HepG2 (cell line): ENCODE measurements at regions of chr10 and their contacts with region 1.

Region 1: GRCh38 chr10:52566471-52567246 is 205.9 kb downstream of the MBL2 start:
- DNase-seq: peak; percentile 16
- ATAC-seq: no peak
- H3K4me3 ChIP-seq: no peak overlapping the region
- H3K27ac ChIP-seq: no peak overlapping the region
- H3K4me1 ChIP-seq: no peaks in the 10 kb centered on the region
- H3K27me3 ChIP-seq: no peaks in the 10 kb centered on the region
- CTCF ChIP-seq: peak; percentile 35; the same call in 1 of the 2 replicates
- EP300 ChIP-seq: no peak
- POLR2A ChIP-seq: no peak
- RAD21 ChIP-seq: 0 out of 2 replicates have a peak, but pooled peaks have one; percentile 29

Region 2: GRCh38 chr10:52488606-52489485 is 77.8 kb before region 1 on chr10:
- CTCF ChIA-PET with region 1: no interaction called
- POLR2A ChIA-PET with region 1: no interaction called
- in situ Hi-C with region 1: no loop called
- intact Hi-C with region 1: loop called (anchors 5 kb)
- DNase-seq: peak; percentile 46
- ATAC-seq: peak; percentile 54; the same call in 1 of the 3 replicates
- H3K4me3 ChIP-seq: no peak overlapping the region
- H3K27ac ChIP-seq: no peak overlapping the region
- H3K4me1 ChIP-seq: no peaks in the 10 kb centered on the region
- H3K27me3 ChIP-seq: no peaks in the 10 kb centered on the region; a peak in 1 of 5 replicates
- CTCF ChIP-seq: peak; percentile 59
- EP300 ChIP-seq: no peak
- POLR2A ChIP-seq: no peak
- RAD21 ChIP-seq: peak; percentile 29; the same call in 1 of the 2 replicates